Activated B cell treated with CpG ODN at 0.5 μM for 24 hours (primary cell): ENCODE measurements at regions of chr5 and their contacts with region 1.

Region 1: GRCh38 chr5:95554647-95555548 is at the starts of genes ARSK and SKIC3:
- DNase-seq: peak; percentile 80
- ATAC-seq: peak; percentile 86
- H3K4me3 Mint-ChIP-seq: peak within 1 kb of the TSS; percentile 95
- H3K27ac Mint-ChIP-seq: peak within 1 kb of the TSS; percentile 92
- H3K4me1 Mint-ChIP-seq: peaks cover 43% of the 10 kb centered on the region
- H3K27me3 Mint-ChIP-seq: no peaks in the 10 kb centered on the region
- CTCF ChIP-seq: no peak
- total RNA-seq, gene ARSK: 2.3 and 2.9 TPM in 2 replicates
- total RNA-seq, gene SKIC3: 67.4 and 78.7 TPM in 2 replicates

Region 2: GRCh38 chr5:95620030-95620869 is 65.4 kb after region 1 on chr5 and contains the start of gene GPR150:
- CTCF ChIA-PET with region 1: interaction called, 3 read pairs
- POLR2A ChIA-PET with region 1: interaction called, 6 read pairs
- intact Hi-C with region 1: loop called (anchors 1 kb)
- DNase-seq: peak; percentile 69
- ATAC-seq: peak; percentile 80
- H3K4me3 Mint-ChIP-seq: peak within 1 kb of the TSS; percentile 88
- H3K27ac Mint-ChIP-seq: peak within 1 kb of the TSS; percentile 62
- H3K4me1 Mint-ChIP-seq: peaks cover 28% of the 10 kb centered on the region
- H3K27me3 Mint-ChIP-seq: no peaks in the 10 kb centered on the region
- CTCF ChIP-seq: no peak
- total RNA-seq, gene GPR150: 0.60 and 1.1 TPM in 2 replicates

Region 3: GRCh38 chr5:95760273-95761191 is 205.6 kb after region 1 on chr5:
- CTCF ChIA-PET with region 1: no interaction called
- POLR2A ChIA-PET with region 1: no interaction called
- intact Hi-C with region 1: loop called (anchors 10 kb)
- DNase-seq: no peak
- ATAC-seq: peak; percentile 82
- H3K4me3 Mint-ChIP-seq: peak overlapping the region; percentile 74
- H3K27ac Mint-ChIP-seq: peak overlapping the region; percentile 89
- H3K4me1 Mint-ChIP-seq: peaks cover 42% of the 10 kb centered on the region
- H3K27me3 Mint-ChIP-seq: no peaks in the 10 kb centered on the region
- CTCF ChIP-seq: no peak

Region 4: DNA sequence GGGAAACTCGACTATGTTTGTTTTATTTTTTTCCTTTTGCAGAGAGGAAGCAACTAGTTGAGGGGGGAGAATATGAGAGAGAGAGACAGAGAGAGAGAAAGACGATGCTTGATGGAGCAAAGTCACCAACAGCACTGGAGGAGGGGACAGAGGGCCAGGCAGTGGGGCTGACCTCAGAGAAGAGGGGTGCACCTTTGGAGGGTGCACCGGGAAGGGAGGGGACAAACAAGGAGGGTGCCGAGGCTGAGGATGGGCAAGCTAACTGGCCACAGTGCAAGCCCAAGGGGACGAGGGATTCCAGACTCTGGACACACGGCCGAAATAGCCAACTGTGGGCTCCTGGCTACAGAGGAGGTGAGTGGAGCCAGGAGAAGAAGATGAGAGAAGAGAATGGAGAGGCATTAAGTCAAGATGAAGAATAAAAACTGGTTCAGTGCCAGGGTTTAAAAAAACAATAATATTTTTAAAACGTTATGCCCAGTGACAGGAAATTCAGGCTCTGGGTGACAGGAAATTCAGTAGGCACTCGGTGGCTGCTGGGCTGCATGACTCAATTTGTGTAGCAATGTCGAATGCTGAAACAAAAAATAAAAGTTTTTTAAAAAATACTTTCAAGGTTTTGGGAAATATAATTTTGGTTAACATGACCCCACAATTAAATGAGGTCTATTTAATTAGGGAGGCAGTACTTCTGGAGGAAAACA is 280.9 kb after region 1 on chr5:
- CTCF ChIA-PET with region 1: no interaction called
- POLR2A ChIA-PET with region 1: no interaction called
- intact Hi-C with region 1: no loop called
- DNase-seq: no peak
- ATAC-seq: no peak
- H3K4me3 Mint-ChIP-seq: peak overlapping the region; percentile 92
- H3K27ac Mint-ChIP-seq: peak overlapping the region; percentile 84
- H3K4me1 Mint-ChIP-seq: peaks cover 55% of the 10 kb centered on the region
- H3K27me3 Mint-ChIP-seq: no peaks in the 10 kb centered on the region
- CTCF ChIP-seq: no peak

Region 5: DNA sequence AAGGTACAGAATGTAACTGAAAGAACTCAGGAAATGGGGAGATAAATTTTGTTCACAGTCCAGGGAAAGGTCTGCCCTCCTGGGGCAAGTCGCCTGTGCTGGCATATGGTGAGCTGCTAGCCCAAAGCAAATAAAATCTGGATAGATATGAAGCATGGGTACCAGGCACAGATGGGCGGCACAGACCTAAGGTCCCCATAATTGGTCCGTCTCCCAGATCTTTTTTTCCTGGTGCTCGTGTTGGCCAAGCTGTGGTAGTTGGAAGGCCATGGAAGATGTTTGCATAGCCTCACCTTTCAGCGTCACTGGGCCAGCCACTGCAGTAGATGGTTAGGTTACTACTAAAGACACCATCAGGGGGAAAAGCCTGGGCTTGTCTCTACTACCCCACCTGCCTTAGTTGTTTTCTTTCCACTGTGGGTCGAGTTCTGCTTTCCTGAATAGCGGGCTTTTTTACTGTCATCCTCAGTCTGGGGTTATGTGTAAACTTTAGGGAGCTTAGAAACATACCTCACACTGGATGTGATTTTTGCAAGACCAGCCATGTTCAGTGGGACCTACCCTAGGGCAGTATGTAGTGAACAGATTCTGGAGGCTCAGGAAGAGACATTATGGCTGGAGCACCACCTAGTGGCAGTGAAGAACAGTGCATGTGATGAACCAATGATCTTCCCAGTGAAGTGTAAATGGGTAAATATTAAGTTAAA is 291.8 kb after region 1 on chr5:
- CTCF ChIA-PET with region 1: interaction called, 3 read pairs
- POLR2A ChIA-PET with region 1: no interaction called
- intact Hi-C with region 1: loop called (anchors 2 kb)
- DNase-seq: peak; percentile 45
- ATAC-seq: peak; percentile 80
- H3K4me3 Mint-ChIP-seq: no peak overlapping the region
- H3K27ac Mint-ChIP-seq: no peak overlapping the region
- H3K4me1 Mint-ChIP-seq: peaks cover 11% of the 10 kb centered on the region
- H3K27me3 Mint-ChIP-seq: no peaks in the 10 kb centered on the region
- CTCF ChIP-seq: peak; percentile 82

Region 6: GRCh38 chr5:97183100-97183929 is 1628.4 kb after region 1 on chr5 and contains the start of gene RIOK2:
- CTCF ChIA-PET with region 1: no interaction called
- POLR2A ChIA-PET with region 1: no interaction called
- intact Hi-C with region 1: loop called (anchors 1 kb)
- DNase-seq: peak; percentile 78
- ATAC-seq: peak; percentile 89
- H3K4me3 Mint-ChIP-seq: peak within 1 kb of the TSS; percentile 96
- H3K27ac Mint-ChIP-seq: peak within 1 kb of the TSS; percentile 99
- H3K4me1 Mint-ChIP-seq: peaks cover 34% of the 10 kb centered on the region
- H3K27me3 Mint-ChIP-seq: no peaks in the 10 kb centered on the region
- CTCF ChIP-seq: no peak
- total RNA-seq, gene RIOK2: 38.3 and 41.4 TPM in 2 replicates